ENCODE measurements at regions of chr19 and their contacts with region 1.

Region 1: DNA sequence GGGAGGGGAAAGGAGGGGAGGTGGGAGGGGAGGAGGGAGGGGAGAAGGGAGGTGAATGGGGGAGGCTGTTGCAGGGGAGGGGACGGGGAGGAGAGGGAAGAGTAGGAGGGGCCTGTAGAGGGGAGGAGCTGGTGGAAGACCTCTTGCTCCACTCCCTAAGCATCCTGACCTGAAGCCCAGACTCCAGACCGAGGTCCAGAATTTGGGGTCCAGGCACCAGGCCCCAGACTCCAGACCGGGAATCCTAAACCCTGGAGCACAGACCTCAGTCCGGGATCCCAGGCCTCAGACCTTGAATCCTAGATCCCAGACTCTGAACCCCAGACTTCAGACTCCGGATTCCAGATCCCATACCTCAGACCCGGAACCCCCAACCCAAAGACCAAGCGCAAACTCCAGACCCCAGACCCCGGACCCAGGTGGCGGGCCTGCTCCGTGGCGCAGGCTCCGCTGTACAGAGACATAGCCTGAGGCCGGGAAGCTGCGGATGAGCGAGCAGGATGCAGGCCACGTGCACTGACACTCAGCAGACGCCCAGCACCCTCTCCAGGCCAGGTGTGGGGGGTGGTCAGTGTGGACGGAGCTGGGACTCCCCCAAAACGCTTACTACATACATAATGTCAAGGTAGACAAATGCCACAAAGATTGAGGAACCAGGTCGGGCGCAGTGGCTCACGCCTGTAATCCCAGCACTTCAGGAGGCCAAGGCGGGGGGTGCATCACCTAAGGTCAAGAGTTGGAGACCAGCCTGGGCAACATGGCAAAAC is 710 bp upstream of the BTBD2 start:
- DNase-seq: peak; percentile 44
- H3K4me3 Mint-ChIP-seq: peak overlapping the region; percentile 77
- H3K27ac Mint-ChIP-seq: peak overlapping the region; percentile 36
- H3K4me1 Mint-ChIP-seq: peaks cover 9% of the 10 kb centered on the region
- H3K27me3 Mint-ChIP-seq: no peaks in the 10 kb centered on the region

Region 2: GRCh38 chr19:1807722-1808397 is 208.4 kb before region 1 on chr19:
- intact Hi-C with region 1: no loop called
- DNase-seq: no peak
- H3K4me3 Mint-ChIP-seq: no peak overlapping the region
- H3K27ac Mint-ChIP-seq: no peak overlapping the region
- H3K4me1 Mint-ChIP-seq: peaks cover 15% of the 10 kb centered on the region
- H3K27me3 Mint-ChIP-seq: no peaks in the 10 kb centered on the region

Region 3: DNA sequence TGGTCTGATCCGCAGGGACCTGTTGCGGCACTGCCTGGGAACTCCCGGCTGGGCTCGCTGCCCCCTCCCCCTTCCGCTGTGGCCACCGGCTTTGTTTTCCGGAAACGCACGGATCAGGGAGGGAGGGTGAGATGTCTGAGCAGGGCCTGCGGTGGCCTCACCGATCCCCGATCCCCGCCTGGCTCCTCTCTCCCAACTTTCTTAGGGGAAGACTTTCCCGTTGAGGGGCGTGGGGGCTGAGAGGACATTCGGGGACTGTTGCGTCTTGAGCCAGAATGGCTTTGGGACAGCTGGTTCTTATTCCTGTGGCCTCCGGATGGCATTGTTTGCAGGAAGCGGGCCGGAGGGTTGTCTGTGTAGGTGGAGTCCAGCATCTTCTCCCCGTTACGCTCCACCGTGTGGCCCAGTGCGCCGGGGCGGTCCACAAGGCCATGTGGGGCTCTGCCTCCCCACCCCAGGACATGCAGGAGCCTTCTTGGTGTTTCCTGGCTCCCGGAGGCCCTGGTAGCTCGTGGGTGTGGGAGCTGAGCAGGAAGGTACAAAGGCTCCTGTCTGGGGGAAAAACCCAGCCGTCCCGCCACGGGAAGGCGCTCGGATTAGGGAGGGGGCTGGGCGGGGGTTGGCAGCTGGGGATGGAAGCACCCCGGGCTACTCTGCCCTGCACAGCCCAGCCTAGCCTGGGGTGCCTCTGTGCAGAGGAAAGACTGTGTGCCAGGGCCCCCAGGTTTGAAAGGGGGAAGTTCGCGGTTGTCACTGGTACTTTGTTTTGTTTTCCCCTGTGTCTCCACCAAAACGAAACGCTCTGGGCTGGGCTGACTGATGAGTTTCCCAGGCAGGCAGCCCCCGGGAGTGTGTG is 73.9 kb before region 1 on chr19:
- intact Hi-C with region 1: loop called (anchors 2 kb)
- DNase-seq: peak; percentile 82
- H3K4me3 Mint-ChIP-seq: peak overlapping the region; percentile 95
- H3K27ac Mint-ChIP-seq: peak overlapping the region; percentile 93
- H3K4me1 Mint-ChIP-seq: peaks cover 30% of the 10 kb centered on the region
- H3K27me3 Mint-ChIP-seq: no peaks in the 10 kb centered on the region

Region 4: DNA sequence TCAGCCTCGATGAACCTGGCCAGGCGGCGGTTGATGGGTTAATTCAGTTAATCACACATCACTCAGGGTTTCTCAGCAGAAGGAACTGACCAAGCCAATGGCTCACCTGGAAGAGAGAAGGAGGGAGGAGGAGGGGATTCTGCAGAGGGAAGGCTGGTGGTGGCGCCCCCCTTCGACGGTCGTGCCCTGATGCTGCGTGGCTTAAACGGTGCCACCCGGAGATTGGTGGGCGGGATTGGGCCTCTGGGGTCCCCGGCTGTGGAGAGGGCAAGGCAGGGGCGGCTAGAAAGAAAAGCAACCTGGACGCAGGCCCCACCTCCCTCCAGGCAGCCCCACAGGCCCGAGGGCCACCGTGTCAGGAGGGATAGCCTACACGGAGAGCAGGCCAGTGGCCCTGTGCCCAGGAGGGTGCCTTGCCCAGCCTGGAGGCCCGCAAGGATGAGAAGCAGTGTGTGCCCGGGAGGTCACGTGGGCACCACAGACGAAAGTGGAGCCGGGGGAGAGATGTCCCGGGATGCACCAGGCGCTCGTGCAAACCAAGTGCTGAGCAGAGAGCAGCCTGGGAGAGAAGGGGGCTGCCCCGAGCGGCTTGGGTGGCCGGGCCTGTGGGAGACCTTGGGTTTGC is 59.2 kb before region 1 on chr19:
- intact Hi-C with region 1: no loop called
- DNase-seq: no peak
- H3K4me3 Mint-ChIP-seq: no peak overlapping the region
- H3K27ac Mint-ChIP-seq: no peak overlapping the region
- H3K4me1 Mint-ChIP-seq: no peaks in the 10 kb centered on the region
- H3K27me3 Mint-ChIP-seq: no peaks in the 10 kb centered on the region

Region 5: DNA sequence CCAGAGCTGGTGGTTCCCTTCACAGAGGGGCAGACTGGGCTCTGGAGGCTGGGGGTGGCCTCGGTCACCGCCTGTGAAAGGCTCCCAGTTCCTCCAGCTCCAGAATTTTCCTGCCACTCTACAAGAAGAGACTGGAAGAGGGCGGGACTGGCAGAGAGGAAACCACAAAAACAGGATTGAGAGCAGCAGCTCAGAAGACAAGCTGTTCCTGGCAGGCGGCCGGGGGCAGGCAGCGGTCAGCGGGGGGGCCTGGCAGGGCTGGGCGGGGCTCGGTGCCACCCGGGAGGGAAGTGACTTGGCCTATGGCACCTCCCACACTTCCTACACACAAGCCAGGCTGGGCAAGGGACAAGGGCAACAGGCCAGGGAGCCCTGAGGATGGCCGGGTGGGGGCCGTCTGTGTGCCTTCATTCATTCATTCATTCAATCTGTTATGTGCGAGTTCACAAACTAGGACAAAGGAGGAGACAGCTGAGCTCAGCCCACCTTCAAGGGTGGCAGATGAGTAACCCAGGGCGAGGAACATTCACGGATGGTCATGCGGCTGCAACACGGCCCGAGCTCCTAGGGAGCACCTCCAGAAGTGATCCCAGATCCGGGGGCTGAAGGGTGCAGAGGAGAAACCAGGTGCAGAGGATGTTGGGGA is 16.2 kb after region 1 on chr19:
- intact Hi-C with region 1: loop called (anchors 1 kb)
- DNase-seq: no peak
- H3K4me3 Mint-ChIP-seq: peak overlapping the region; percentile 58
- H3K27ac Mint-ChIP-seq: peak overlapping the region; percentile 80
- H3K4me1 Mint-ChIP-seq: peaks cover 24% of the 10 kb centered on the region
- H3K27me3 Mint-ChIP-seq: no peaks in the 10 kb centered on the region

Region 6: GRCh38 chr19:2041683-2042484 is 25.7 kb after region 1 on chr19:
- intact Hi-C with region 1: loop called (anchors 1 kb)
- DNase-seq: peak; percentile 99
- H3K4me3 Mint-ChIP-seq: peak overlapping the region; percentile 81
- H3K27ac Mint-ChIP-seq: peak overlapping the region; percentile 87
- H3K4me1 Mint-ChIP-seq: peaks cover 4% of the 10 kb centered on the region
- H3K27me3 Mint-ChIP-seq: no peaks in the 10 kb centered on the region

Region 7: DNA sequence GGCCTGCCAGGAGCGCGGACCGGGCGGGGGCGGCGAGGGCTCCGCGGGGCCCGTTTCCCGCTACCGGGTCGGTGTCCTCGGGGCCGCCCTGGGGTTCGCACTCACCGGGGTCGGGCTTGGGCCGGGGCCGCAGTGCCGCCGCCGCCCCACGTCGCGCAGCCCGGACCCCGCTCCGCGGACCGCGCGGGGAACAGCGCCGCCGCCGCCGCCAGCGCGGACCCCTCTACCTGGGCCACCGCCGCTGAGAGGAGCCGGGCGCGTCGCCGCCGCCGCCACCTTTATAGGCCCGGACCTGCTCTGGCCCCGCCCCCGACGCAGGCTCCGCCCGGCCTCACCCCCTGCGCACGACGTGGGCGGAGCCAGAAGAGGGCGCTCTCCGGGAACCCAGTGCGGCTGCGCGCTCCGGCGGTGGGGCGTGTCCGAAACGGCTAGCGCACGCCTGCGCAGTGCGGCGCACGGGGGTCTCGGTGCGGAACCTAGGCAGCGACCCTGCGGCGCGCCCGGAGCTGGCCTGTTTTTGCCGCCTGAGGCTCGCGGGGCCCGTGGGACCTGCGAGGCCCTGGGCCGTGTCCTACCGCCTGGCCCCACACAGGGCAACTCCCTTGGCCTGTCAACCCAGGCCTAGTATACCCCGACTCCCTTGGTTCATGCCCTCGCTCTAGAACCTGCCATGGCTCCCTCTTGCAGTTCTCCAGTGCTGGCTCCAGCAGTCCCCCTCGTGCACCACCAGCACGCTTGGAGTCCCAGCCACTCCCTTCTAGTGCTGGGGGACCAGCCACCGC is 35.0 kb after region 1 on chr19 and contains the start of gene MKNK2:
- intact Hi-C with region 1: loop called (anchors 1 kb)
- DNase-seq: peak; percentile 92
- H3K4me3 Mint-ChIP-seq: peak within 1 kb of the TSS; percentile 87
- H3K27ac Mint-ChIP-seq: peak within 1 kb of the TSS; percentile 87
- H3K4me1 Mint-ChIP-seq: peaks cover 27% of the 10 kb centered on the region
- H3K27me3 Mint-ChIP-seq: no peaks in the 10 kb centered on the region
- total RNA-seq, gene MKNK2: 150 and 166 TPM in 2 replicates

Region 8: GRCh38 chr19:2084993-2085720 is 68.9 kb after region 1 on chr19:
- intact Hi-C with region 1: loop called (anchors 1 kb)
- DNase-seq: peak; percentile 96
- H3K4me3 Mint-ChIP-seq: peak overlapping the region; percentile 94
- H3K27ac Mint-ChIP-seq: peak overlapping the region; percentile 96
- H3K4me1 Mint-ChIP-seq: peaks cover 69% of the 10 kb centered on the region
- H3K27me3 Mint-ChIP-seq: peaks cover 2% of the 10 kb centered on the region

Region 9: GRCh38 chr19:2168619-2169424 is 152.6 kb after region 1 on chr19:
- intact Hi-C with region 1: loop called (anchors 5 kb)
- DNase-seq: peak; percentile 37
- H3K4me3 Mint-ChIP-seq: peak overlapping the region; percentile 81
- H3K27ac Mint-ChIP-seq: peak overlapping the region; percentile 87
- H3K4me1 Mint-ChIP-seq: peaks cover 53% of the 10 kb centered on the region
- H3K27me3 Mint-ChIP-seq: peaks cover 1% of the 10 kb centered on the region

Measured in activated T-helper 1 cell treated with anti-CD3 and anti-CD28 coated beads, Interleukin-12 subunit alpha, Interleukin-12 subunit beta, Interleukin-2, Interleukin-4 antibody, amounts not matched to agents 30 ng/mL and 10 ng/mL and 1 ng/mL, durations not matched to agents 14 hours and 24 hours and 36 hours (primary cell).